ENCODE measurements at regions of chr4 and their contacts with region 1.

Region 1: GRCh38 chr4:3945511-3946290 is 179.5 kb downstream of the ADRA2C start:
- DNase-seq: no peak
- H3K4me3 Mint-ChIP-seq: no peak overlapping the region
- H3K27ac Mint-ChIP-seq: no peak overlapping the region
- H3K4me1 Mint-ChIP-seq: peaks cover 16% of the 10 kb centered on the region
- H3K27me3 Mint-ChIP-seq: no peaks in the 10 kb centered on the region
- CTCF ChIP-seq: no peak

Region 2: DNA sequence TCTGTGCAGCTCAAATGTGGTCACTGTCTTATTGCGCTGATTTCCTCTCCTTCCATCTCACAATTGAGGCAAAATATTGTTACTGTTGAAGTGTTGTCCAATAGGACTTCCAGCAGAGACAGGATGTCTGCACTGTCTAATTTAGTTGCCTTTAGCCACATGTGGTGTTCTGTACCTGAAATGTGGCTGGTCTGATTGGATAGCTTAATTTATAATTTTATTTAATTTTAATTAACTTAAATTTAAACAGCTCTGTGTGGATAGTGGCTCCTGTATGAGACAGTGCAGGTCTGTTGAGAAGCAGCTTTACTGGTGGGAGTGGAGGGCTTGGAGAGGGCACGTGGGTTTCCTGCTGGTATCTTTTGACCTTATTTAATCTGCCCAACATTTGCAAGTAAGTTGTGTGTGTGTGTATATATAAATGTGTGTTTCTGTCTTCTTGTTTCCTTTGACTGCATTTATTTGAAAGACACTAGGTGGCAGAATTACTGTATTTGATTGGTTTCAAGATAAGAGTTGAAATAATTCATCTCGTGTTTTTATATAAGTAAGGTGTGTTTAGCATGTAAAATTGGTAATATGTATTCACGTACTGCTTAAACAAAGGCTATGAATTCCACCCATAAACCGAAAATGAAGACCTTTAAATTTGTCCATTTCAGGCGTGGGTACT is 752.0 kb before region 1 on chr4:
- CTCF ChIA-PET with region 1: no interaction called
- POLR2A ChIA-PET with region 1: no interaction called
- intact Hi-C with region 1: loop called (anchors 10 kb)
- DNase-seq: peak; percentile 6
- H3K4me3 Mint-ChIP-seq: no peak overlapping the region
- H3K27ac Mint-ChIP-seq: no peak overlapping the region
- H3K4me1 Mint-ChIP-seq: peaks cover 9% of the 10 kb centered on the region
- H3K27me3 Mint-ChIP-seq: no peaks in the 10 kb centered on the region
- CTCF ChIP-seq: peak; percentile 34

Region 3: DNA sequence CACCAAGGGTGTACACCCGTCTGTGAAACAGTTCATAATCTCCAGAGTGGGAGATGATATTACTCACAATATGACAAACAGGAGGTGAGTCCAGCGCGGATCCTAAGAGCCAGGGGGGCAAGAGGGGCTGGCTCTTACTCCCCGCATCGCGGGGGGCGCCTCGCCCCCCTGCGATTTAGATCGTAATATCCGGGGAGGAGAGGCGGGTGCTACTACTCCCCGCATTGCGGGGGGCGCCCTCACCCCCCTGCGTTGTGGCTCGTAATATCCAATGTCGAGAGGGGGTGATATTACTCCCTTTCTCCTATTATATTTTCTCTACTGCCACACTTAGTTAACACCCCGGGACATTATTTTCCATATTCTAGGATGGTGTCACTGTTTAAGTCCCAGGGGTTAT is 47.6 kb before region 1 on chr4:
- CTCF ChIA-PET with region 1: no interaction called
- POLR2A ChIA-PET with region 1: no interaction called
- intact Hi-C with region 1: loop called (anchors 10 kb)
- DNase-seq: no peak
- H3K4me3 Mint-ChIP-seq: no peak overlapping the region
- H3K27ac Mint-ChIP-seq: no peak overlapping the region
- H3K4me1 Mint-ChIP-seq: no peaks in the 10 kb centered on the region
- H3K27me3 Mint-ChIP-seq: peaks cover 41% of the 10 kb centered on the region
- CTCF ChIP-seq: no peak